Sciatic nerve (tissue), 2 donors: ENCODE measurements at regions of chr6 and their contacts with region 1.

Region 1: DNA sequence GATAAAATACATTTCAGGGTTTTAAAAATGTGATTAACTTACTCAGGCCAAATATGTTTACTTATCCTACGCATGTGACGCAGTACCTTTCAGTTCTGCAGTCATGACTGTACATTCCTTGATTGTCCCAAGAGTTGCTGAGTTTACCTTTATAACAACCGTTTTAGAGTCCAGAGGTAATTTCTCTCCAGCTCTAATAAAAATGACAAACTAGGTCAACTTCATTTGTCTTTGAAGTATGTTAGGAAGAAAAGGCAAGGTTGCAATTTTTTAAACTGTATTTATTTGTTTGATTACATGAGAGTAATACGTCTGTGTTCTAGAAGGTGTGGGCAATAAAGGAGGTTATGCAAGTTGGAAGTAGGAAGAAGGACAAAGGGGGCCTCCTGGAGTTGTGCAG is 38.6 kb upstream of the UBR2 start:
- DNase-seq: no peak
- ATAC-seq: no peak

Region 2: GRCh38 chr6:41859356-41859755 is 665.9 kb before region 1 on chr6:
- intact Hi-C with region 1: loop called (anchors 5 kb)
- DNase-seq: no peak
- ATAC-seq: no peak